T-cell (primary cell): ENCODE measurements at regions of chr1 and their contacts with region 1.

Region 1: DNA sequence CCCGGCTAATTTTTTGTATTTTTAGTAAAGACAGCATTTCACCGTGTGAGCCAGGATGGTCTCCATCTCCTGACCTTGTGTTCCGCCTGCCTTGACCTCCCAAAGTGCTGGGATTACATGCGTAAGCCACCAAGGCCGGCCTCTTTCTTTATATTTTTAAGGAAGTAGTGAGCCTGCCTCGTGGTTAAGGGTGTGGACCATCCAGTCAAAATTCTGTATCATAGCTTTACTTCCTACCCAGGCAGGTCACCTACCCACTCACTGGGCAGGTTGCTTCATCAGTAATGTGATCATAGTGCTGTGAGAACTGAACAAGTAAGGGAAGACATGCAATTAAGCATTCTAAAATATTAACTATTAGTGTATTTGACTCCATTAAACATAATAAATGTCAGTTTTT is 8.1 kb upstream of the ACOT7 start:
- DNase-seq: no peak
- ATAC-seq: no peak
- H3K4me3 ChIP-seq: no peak overlapping the region
- H3K4me3 Mint-ChIP-seq: no peak overlapping the region
- H3K27ac ChIP-seq: no peak overlapping the region
- H3K27ac Mint-ChIP-seq: no peak overlapping the region
- H3K4me1 ChIP-seq: no peaks in the 10 kb centered on the region
- H3K4me1 Mint-ChIP-seq: peaks cover 0 to 2% (median 2%) of the 10 kb centered on the region in 3 donors
- H3K27me3 ChIP-seq: peaks cover 0 to 14% of the 10 kb centered on the region in 2 experiments
- H3K27me3 Mint-ChIP-seq: peaks cover 0 to 4% of the 10 kb centered on the region in 2 donors

Region 2: DNA sequence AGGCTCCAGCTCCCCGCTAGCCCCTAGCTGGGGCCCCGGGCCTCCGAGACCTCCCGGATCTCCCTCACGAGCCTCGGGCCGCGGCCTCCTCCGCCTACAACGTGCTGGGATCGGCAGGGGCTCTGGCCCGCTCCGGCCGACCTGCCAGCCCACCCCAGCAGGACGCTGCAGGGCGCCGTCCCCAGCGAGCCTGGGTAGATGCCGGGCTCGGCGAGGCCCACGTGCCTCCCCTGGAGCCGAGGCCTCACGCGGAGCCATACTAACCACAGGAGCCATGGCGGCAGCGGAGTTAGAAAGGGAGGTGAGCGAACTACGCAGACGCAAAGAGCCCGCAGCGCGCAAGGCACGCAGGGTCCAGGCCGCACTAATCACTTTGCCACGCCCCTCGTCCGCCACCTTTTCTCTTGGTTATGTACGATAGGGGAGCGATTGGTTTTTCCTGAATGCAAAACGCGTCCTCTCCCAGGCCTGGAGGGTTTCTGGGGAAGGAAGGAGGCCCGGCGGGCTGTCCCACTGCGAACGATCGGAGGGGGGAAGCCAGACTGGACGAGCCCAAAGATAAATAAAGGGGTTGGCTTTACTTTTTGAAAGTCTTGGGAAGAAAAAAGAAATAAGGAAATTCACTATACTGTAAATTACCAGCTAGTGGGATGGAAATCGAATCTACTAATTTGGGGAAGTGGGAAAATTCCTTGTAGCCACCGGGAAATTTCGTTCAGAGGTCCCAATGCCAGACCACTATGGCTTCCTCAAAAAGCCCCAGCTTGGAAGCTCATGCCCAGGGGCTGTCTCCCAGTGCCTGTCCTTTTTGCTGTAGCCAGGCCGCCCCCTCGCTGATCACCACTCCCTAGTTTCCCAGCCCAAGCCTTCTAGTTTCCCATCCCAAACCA is 202.1 kb before region 1 on chr1 and contains the start of gene RPL22:
- CTCF ChIA-PET with region 1: no interaction called
- POLR2A ChIA-PET with region 1: interaction called in 1 of 2 experiments, 10 read pairs
- DNase-seq: peak; percentile 91 to 99 (median 96)
- ATAC-seq: peak; percentile 97 to 98 (median 97)
- H3K4me3 ChIP-seq: peak within 1 kb of the TSS; percentile 93 to 98
- H3K4me3 Mint-ChIP-seq: peak within 1 kb of the TSS; percentile 85 to 97 (median 96)
- H3K27ac ChIP-seq: peak within 1 kb of the TSS; percentile 61
- H3K27ac Mint-ChIP-seq: peak within 1 kb of the TSS; percentile 97
- H3K4me1 ChIP-seq: peaks cover 12 to 32% of the 10 kb centered on the region in 2 experiments
- H3K4me1 Mint-ChIP-seq: peaks cover 42 to 51% (median 50%) of the 10 kb centered on the region in 3 donors
- H3K27me3 ChIP-seq: peaks cover 0 to 3% of the 10 kb centered on the region in 2 experiments
- H3K27me3 Mint-ChIP-seq: peaks cover 0 to 1% of the 10 kb centered on the region in 2 donors
- total RNA-seq, gene RPL22: 448 to 621 (median 462) TPM

Region 3: GRCh38 chr1:6347641-6348487 is 53.8 kb before region 1 on chr1:
- CTCF ChIA-PET with region 1: interaction called, 8 to 18 read pairs
- POLR2A ChIA-PET with region 1: interaction called in 1 of 2 experiments, 5 read pairs
- DNase-seq: peak; percentile 27 to 79 (median 58)
- ATAC-seq: peak; percentile 61 to 74 (median 66)
- H3K4me3 ChIP-seq: peak overlapping the region; percentile 6 to 28
- H3K4me3 Mint-ChIP-seq: peak overlapping the region; percentile 49 to 88 (median 53)
- H3K27ac ChIP-seq: peak overlapping the region; percentile 76
- H3K27ac Mint-ChIP-seq: peak overlapping the region; percentile 79 to 82
- H3K4me1 ChIP-seq: peaks cover 3 to 24% of the 10 kb centered on the region in 2 experiments
- H3K4me1 Mint-ChIP-seq: peaks cover 22 to 30% (median 27%) of the 10 kb centered on the region in 3 donors
- H3K27me3 ChIP-seq: no peaks in the 10 kb centered on the region
- H3K27me3 Mint-ChIP-seq: no peaks in the 10 kb centered on the region

Region 4: DNA sequence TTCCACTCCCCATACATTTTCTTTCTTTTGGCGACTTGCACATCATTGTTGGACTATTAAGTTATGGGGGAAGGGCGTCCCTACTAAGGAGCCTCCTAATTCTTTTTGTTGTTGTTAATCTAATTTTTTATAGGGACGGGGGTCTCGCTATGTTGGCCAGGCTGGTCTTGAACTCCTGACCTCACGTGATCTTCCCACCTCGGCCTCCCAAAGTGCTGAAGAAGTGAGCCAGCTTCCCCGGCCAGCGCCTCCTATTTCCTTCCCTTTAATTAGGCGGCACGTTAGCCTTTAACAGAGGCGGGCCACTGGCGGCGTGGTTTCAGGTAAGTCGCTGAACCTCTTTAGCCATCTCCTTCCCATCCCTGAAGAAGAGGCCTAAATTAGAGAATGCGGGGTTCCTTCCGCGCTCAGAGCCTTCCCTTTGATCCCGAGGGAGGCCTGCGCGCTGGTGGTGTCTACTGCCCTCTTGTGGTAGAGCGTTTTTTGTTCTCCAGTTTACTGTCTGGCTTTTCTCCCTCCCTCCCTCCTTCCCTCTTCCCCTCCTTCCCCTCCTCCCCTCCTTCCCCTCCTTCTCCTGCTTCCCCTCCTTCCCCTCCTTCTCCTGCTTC is 1500.9 kb after region 1 on chr1:
- CTCF ChIA-PET with region 1: no interaction called
- POLR2A ChIA-PET with region 1: no interaction called
- DNase-seq: peak in 33 of 35 experiments; percentile 7 to 84 (median 36)
- ATAC-seq: peak; percentile 60 to 78 (median 68)
- H3K4me3 ChIP-seq: peak overlapping the region; percentile 42 to 47
- H3K4me3 Mint-ChIP-seq: peak overlapping the region; percentile 57 to 63 (median 58)
- H3K27ac ChIP-seq: no peak overlapping the region
- H3K27ac Mint-ChIP-seq: no peak overlapping the region
- H3K4me1 ChIP-seq: peaks cover 0 to 18% of the 10 kb centered on the region in 2 experiments
- H3K4me1 Mint-ChIP-seq: peaks cover 0 to 33% (median 4%) of the 10 kb centered on the region in 3 donors
- H3K27me3 ChIP-seq: peaks cover 0 to 5% of the 10 kb centered on the region in 2 experiments
- H3K27me3 Mint-ChIP-seq: no peaks in the 10 kb centered on the region